ENCODE measurements at regions of chr4 and their contacts with region 1.

Region 1: GRCh38 chr4:184474263-184475095 is at the start of gene IRF2:
- DNase-seq: peak; percentile 98
- ATAC-seq: peak; percentile 95
- total RNA-seq, gene IRF2: 34.0 TPM

Region 2: DNA sequence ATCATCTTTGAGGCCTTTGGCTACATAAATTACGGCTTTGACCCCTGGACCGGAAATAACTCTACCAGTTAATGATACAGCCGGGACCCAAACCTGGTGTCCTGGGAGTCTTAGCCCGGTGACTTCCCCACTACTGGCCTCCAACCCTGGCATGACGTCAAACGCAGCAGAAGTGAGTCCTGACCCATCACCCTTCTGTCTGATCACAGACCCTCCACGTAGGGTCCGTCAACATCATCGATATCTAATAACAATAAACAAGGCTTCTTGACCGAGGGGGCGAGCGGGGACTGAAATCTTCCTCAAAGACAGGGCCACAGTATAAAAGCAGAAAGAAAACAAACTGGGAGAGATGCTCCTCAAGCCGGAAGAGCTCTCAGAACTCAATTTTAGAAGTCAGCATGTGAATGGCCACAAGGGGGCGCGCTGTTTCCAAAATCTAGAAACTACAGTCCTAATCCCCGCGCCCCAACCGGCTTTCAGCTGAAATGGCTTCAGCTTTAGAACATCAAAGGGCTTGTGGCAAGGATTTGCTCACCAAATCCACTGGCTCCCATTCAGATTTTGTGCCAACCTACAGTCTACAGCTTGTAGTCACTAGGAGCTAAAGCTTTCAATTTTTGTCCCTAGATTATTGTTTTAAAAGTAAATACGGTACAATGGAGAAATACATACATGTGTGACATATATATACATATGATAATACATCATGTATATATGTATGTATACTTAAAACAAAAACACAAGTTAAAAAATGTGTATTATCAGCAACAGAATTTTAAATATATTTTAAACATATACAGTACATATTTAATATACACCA is 210.4 kb before region 1 on chr4:
- intact Hi-C with region 1: loop called (anchors 5 kb)
- DNase-seq: peak; percentile 96
- ATAC-seq: peak; percentile 82

Region 3: DNA sequence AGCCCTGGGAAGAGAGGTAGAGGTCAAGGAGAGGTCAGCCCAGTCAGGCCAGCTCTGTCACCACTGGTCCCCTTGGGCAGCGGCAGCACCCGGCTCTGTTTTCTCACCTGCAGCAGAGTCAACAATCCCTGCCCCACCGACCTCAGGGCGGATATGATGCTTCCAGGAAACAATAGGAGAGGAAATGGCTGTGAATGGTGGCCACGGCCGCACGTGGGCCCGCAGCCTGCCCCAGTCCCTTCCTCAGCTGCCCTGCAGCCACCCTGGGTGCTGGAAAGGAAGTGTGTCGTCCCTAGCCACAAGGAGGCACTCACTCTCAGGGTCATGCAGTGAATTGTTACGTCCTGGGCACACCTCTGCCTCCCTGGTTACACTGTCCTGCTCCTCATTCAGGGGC is 164.3 kb before region 1 on chr4:
- intact Hi-C with region 1: no loop called
- DNase-seq: peak; percentile 74
- ATAC-seq: peak; percentile 76

Region 4: DNA sequence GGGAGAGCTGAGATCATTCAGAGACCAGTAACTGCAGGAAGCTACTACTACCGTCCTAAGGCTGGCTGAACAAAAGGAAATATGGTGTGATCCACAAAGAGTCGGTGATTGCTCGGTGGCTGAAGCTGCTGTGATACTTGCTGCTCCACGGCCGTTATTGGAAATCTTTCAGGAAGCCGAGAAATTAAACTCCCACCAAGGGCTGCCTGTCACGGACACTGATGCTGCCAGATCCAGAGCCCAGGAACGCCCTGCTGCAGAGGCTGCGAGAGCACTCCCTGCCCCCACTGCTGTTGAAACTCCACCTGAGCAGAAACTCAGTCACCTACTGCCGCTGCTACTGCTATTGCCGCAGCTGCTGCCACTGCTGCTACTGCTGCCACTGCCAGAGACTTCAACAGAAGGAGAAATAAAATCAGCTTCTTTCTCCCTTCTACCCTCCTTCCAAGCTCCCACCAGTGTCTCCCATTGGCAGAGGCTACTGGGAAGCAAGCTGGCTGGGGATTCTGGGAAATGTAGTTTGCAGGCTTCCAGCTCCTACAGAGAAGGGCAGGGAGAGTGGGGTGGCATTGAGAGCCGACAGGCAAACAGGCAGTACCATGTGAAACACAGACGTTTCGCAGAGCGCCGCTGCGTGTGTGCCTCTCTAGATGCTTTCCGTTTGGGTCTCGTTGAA is 130.8 kb before region 1 on chr4:
- intact Hi-C with region 1: loop called (anchors 2 kb)
- DNase-seq: peak; percentile 85
- ATAC-seq: peak; percentile 78

Region 5: GRCh38 chr4:184408021-184408710 is 66.3 kb before region 1 on chr4:
- intact Hi-C with region 1: loop called (anchors 5 kb)
- DNase-seq: no peak
- ATAC-seq: no peak

Region 6: DNA sequence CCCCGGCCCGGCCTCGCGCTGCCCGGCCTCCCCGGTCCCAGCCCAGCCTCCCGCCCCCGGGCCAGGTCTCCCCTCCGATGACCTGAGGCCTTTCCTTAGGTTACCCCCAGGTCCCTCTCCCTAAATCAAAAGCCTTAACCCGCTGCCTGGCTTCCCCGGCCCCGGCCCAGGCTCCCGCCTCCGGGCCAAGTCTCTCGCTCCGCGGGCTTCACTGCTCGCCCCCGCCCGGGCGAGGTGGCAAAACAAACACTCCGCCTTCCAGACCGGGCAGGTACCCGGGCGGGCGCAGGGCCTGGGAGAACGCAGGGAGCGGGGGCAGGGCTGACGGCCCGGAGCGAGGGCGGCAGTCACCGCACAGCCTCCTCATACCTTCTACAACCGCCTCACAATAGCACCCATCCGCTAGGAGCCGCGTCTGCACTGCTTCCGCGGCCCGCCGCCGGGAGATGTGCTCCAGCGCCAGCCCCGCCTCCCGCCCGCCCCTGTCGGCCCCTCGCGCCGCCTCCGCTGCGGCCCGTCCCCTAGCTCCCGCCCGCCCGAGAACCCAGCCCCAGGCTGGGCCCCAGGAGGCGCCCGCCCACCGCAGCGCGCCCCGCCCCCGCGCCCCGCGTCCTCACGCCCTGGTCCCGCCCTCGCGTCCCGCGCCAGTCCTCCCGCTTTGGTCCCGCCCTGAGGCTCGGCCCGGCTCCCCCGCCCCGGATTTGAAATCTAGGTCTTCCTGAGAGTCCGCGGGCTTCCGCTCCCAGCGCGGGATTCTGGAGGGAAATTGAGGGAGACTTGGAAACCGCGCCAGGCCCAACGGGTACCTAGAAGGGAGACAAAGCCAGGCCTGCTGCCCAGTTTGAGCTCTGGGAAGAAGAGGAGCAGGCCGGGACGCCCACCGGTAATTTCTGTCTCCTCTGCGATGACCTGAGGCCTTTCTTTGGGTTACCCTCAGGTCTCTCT is 174.8 kb after region 1 on chr4 and contains the starts of genes CASP3 and PRIMPOL:
- intact Hi-C with region 1: loop called (anchors 5 kb)
- DNase-seq: peak; percentile 99
- ATAC-seq: peak; percentile 98
- total RNA-seq, gene CASP3: 10.4 TPM
- total RNA-seq, gene PRIMPOL: 10.8 TPM

Region 7: DNA sequence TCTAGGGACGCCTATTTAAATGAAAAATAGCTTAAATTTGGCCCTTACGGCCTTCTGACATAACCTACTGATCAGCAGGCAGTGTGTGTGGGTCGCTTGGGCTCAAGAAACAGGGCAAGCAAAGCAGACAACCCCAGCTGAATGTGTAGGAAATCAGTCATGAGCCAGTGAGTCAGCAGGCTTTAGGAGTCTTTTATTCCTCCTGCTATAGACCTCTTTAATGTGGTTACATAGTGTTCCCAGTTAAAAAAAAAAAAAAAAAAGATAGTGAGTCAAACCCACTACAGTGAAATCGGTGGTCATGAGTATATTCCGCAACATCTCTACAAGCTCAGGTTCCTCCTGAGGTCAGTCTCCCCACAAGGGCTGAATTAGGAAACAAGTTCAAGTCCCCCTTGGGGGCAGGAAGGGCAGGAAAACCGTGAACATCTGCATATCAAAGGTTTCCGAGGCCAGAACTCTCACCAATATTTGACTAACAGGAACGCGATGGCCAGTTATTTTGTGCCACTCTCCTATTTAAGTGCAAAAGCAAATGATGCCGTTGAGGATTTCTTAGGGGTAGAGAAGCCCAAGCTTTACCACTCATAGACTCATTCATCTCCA is 318.6 kb after region 1 on chr4:
- intact Hi-C with region 1: no loop called
- DNase-seq: no peak
- ATAC-seq: peak; percentile 30

Measured in Right ventricle myocardium inferior (tissue), 1 donor.